Adrenal gland (tissue), 19 donors: ENCODE measurements at regions of chr3 and their contacts with region 1.

Region 1: DNA sequence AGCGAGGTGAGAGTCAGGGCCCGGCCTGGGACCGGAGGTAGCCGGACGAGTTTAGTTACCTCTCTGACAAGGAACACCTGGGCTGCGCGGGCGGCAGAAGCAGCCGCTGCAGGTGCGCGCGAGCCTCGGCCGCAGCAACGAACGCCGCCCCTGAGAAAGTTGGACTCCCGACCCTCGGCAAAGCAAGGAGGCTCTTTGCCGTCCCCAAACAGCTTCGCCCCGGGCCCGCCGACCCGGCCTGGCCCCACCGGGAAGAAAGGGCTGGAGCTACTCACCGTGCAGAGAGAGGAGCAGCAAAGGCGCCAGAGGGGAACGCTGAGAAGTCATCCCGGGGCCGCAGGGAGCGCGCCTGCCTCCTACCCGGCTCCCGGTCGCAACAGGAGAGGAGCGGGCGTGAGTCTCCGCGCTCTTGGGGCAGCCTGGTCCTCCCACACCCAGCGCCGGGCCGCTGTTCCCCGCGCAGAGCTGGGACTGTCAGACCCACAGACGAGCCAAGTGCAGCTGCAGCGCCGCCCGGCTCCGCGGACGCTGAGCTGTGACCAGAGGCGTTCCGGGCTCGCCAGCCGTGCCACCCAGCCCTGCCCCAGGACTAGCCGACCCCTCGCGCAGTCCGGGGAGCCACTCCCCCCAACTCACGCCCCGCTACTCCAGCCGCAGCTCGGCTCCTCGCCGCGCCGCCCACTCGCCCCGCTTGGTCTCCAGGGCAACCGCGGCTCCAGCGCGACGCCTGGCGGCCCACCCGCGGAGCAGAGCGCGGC is at the start of gene IGSF11:
- DNase-seq: peak; percentile 79 to 85 (median 84)
- H3K4me3 ChIP-seq: peak within 1 kb of the TSS in 3 of 4 donors; percentile 29 to 80 (median 48)
- H3K27ac ChIP-seq: peak within 1 kb of the TSS in 3 of 5 donors; percentile 42 to 82 (median 76)
- H3K4me1 ChIP-seq: peaks cover 0 to 12% of the 10 kb centered on the region in 2 donors
- H3K27me3 ChIP-seq: no peaks in the 10 kb centered on the region
- CTCF ChIP-seq: peak in 5 of 6 experiments; percentile 28 to 83 (median 67)
- POLR2A ChIP-seq: peak; percentile 62 to 80
- total RNA-seq, gene IGSF11: 12.0 to 31.3 (median 22.5) TPM

Region 2: DNA sequence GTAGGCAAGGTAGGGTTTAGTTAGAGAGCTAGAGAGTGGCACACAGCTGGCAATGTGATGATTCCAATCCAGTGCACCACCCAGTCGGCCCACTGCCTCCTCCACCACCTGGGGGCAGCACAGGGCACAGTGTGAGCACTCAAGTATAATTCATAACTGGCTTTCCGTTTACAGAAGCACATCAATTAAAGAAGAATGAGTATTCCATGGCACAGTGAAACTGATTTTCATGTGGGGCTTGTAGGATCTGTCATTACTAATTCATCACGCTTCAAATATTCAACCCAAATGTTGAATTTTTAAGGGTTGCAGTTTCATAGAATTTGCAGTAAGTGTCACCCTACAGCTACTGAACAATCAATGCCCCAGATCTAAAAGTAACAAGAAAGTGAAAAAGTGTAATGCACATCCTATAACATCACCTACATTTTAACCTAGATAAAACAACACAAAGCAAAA is 149.7 kb before region 1 on chr3:
- intact Hi-C with region 1: loop called (anchors 2 to 10 kb)
- DNase-seq: peak; percentile 63 to 91 (median 83)
- H3K4me3 ChIP-seq: no peak overlapping the region
- H3K27ac ChIP-seq: no peak overlapping the region
- H3K4me1 ChIP-seq: no peaks in the 10 kb centered on the region
- H3K27me3 ChIP-seq: no peaks in the 10 kb centered on the region
- CTCF ChIP-seq: peak; percentile 81 to 95 (median 90)
- POLR2A ChIP-seq: no peak

Region 3: DNA sequence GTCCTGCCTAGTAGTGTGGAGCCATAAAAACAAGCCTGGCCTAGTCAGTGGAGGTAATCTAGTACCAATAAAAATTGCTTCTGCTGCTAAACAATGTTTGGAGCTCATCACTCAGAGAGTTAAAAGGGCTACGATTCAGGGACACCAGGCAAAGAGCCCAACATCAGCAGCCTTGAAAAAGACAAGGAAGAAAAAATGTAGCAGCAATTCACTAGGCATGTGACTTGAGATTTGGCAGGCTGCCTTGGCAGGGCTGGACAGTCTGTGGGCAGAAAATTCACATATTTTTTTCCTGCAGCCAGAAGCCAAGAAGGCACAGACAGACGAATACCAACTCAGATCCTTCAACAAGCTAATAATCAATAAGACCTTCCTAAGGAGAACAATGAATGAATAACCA is 47.0 kb before region 1 on chr3:
- intact Hi-C with region 1: loop called in 1 of 2 experiments (anchors 5 kb)
- DNase-seq: peak; percentile 91 to 97 (median 94)
- H3K4me3 ChIP-seq: no peak overlapping the region
- H3K27ac ChIP-seq: peak overlapping the region; percentile 14 to 74 (median 35)
- H3K4me1 ChIP-seq: peaks cover 35 to 50% of the 10 kb centered on the region in 2 donors
- H3K27me3 ChIP-seq: no peaks in the 10 kb centered on the region
- CTCF ChIP-seq: no peak
- POLR2A ChIP-seq: peak in 1 of 2 donors; percentile 47

Region 4: DNA sequence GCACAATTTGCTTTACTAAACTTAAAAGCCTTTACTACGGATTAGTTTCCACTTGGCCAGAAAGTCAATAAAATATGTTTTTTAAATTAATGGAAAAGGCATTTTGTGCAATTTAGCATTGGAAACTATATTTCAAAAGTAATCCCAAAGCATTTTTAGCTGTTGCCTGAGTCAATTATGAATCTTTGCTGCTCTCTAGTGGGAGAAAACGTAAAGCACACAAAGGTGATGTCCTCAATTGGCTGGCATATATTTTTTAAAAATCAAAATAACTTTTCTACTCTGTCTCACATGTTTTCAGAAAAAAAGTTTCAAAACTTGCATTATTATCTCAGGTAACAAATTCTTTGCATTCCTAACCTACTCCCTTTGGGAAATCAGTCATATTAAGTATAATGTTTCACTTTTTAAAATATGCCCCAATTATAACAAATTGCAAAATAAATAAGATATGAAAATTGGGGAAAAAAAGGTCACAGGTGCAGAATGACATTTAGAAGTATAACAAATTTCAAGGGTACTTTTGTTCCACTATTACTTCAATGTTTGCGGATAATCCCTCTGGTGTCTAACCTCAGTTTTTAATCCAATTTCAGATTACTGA is 64.3 kb after region 1 on chr3:
- intact Hi-C with region 1: loop called in 1 of 2 experiments (anchors 5 kb)
- DNase-seq: peak in 2 of 7 donors; percentile 19 to 28
- H3K4me3 ChIP-seq: no peak overlapping the region
- H3K27ac ChIP-seq: no peak overlapping the region
- H3K4me1 ChIP-seq: no peaks in the 10 kb centered on the region
- H3K27me3 ChIP-seq: no peaks in the 10 kb centered on the region
- CTCF ChIP-seq: peak; percentile 52 to 79 (median 73)
- POLR2A ChIP-seq: no peak

Region 5: GRCh38 chr3:119194237-119195150 is 160.1 kb after region 1 on chr3:
- intact Hi-C with region 1: no loop called
- DNase-seq: no peak
- H3K4me3 ChIP-seq: no peak overlapping the region
- H3K27ac ChIP-seq: no peak overlapping the region
- H3K4me1 ChIP-seq: no peaks in the 10 kb centered on the region
- H3K27me3 ChIP-seq: no peaks in the 10 kb centered on the region
- CTCF ChIP-seq: no peak
- POLR2A ChIP-seq: no peak